ENCODE measurements at regions of chr1 and their contacts with region 1.

Region 1: DNA sequence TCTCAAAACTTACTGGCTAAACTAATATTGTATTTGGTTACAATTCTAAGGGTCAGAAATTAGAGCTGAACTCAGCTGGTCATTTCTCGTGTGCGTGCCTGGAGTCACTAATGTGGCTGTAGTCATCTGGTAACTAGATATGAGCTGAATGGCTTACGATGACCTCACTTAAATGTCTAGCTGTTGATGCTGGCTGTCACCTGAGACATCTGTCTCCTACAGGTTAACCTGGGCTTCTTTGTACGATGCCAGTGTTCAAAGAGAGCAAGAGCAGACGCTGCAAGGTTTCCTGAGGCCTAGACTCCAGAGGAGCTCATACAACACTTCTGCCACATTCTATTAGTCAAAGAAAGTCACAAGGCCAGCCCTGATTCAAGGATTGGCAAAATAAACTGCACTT is 17.1 kb upstream of the ALG6 start:
- DNase-seq: no peak
- H3K4me3 ChIP-seq: no peak overlapping the region
- H3K27ac ChIP-seq: no peak overlapping the region
- H3K4me1 ChIP-seq: no peaks in the 10 kb centered on the region
- H3K27me3 ChIP-seq: peaks cover 0 to 10% of the 10 kb centered on the region in 2 donors
- CTCF ChIP-seq: no peak
- POLR2A ChIP-seq: no peak

Region 2: GRCh38 chr1:63448731-63449246 is 98.5 kb after region 1 on chr1:
- intact Hi-C with region 1: loop called (anchors 5 kb)
- DNase-seq: no peak
- H3K4me3 ChIP-seq: no peak overlapping the region
- H3K27ac ChIP-seq: no peak overlapping the region
- H3K4me1 ChIP-seq: no peaks in the 10 kb centered on the region
- H3K27me3 ChIP-seq: no peaks in the 10 kb centered on the region
- CTCF ChIP-seq: no peak
- POLR2A ChIP-seq: no peak

Region 3: GRCh38 chr1:64006276-64007051 is 656.1 kb after region 1 on chr1:
- intact Hi-C with region 1: no loop called
- DNase-seq: no peak
- H3K4me3 ChIP-seq: no peak overlapping the region
- H3K27ac ChIP-seq: no peak overlapping the region
- H3K4me1 ChIP-seq: no peaks in the 10 kb centered on the region
- H3K27me3 ChIP-seq: no peaks in the 10 kb centered on the region
- CTCF ChIP-seq: no peak
- POLR2A ChIP-seq: no peak

Measured in breast epithelium (tissue), 4 donors.